Right cardiac atrium (tissue), 5 donors: ENCODE measurements at regions of chr5 and their contacts with region 1.

Region 1: DNA sequence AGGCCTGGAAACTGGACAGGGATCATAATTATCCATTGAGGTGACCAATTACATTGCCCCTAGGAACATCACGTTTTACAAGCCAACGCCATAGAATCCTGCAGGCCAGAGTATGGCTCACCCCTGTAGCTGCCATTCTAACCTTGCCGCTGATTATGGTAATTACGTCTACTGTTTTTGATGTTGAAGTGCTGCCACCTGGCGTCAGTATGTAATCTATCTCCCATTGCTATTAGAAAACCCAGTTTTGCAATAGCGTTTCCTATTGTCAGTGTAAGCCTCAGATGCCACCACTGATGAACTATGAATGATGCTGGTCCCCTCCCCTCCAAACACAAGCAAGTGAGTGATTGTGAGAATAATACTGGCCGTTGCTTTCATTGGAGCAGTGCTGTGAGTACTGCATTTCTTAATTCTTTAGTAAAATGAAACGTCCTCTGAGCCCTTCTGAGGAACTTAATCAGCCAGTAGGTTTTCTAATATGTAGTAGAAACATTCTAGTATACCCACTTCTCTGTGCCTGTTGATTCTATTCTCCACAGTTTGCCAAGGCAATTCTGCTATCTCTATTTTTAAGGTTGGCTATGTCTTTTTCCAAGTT is 100.5 kb upstream of the NMUR2 start:
- DNase-seq: peak in 2 of 3 donors; percentile 54 to 61
- ATAC-seq: peak; percentile 62 to 78
- H3K4me3 ChIP-seq: no peak overlapping the region
- H3K27ac ChIP-seq: no peak overlapping the region
- H3K4me1 ChIP-seq: no peaks in the 10 kb centered on the region
- H3K27me3 ChIP-seq: no peaks in the 10 kb centered on the region

Region 2: DNA sequence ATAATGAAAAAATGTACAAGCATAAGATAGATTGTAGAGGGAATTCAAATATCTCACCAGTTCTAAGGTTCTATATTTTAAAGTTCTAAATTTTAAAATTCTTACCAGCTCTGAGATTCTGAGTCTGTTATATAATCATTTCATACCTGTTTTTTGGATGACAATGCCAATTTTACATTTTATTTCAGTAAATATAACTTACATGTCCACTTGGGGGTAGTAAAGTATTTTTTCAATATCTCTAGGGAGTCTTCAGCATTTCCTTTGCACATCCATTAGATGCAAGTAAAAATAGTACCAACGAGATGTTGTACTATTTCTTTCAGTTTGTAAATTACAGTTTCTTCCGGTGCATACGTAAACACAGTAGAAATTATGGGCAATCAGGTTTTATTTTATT is 126.2 kb before region 1 on chr5:
- intact Hi-C with region 1: loop called in 1 of 4 experiments (anchors 10 kb)
- DNase-seq: no peak
- ATAC-seq: no peak
- H3K4me3 ChIP-seq: no peak overlapping the region
- H3K27ac ChIP-seq: no peak overlapping the region
- H3K4me1 ChIP-seq: peaks cover 3% of the 10 kb centered on the region
- H3K27me3 ChIP-seq: no peaks in the 10 kb centered on the region